Breast epithelium (tissue), 4 donors: ENCODE measurements at regions of chr11 and their contacts with region 1.

Region 1: GRCh38 chr11:73578592-73579185 is 19.2 kb downstream of the FAM168A start:
- DNase-seq: no peak
- H3K4me3 ChIP-seq: no peak overlapping the region
- H3K27ac ChIP-seq: peak overlapping the region; percentile 8 to 34
- H3K4me1 ChIP-seq: no peaks in the 10 kb centered on the region
- H3K27me3 ChIP-seq: no peaks in the 10 kb centered on the region
- CTCF ChIP-seq: no peak
- POLR2A ChIP-seq: no peak

Region 2: GRCh38 chr11:73519266-73519665 is 59.4 kb before region 1 on chr11:
- intact Hi-C with region 1: loop called (anchors 2 kb)
- DNase-seq: no peak
- H3K4me3 ChIP-seq: no peak overlapping the region
- H3K27ac ChIP-seq: no peak overlapping the region
- H3K4me1 ChIP-seq: no peaks in the 10 kb centered on the region
- H3K27me3 ChIP-seq: no peaks in the 10 kb centered on the region
- CTCF ChIP-seq: no peak
- POLR2A ChIP-seq: no peak